HepG2 (cell line): ENCODE measurements at regions of chrX and their contacts with region 1.

Region 1: DNA sequence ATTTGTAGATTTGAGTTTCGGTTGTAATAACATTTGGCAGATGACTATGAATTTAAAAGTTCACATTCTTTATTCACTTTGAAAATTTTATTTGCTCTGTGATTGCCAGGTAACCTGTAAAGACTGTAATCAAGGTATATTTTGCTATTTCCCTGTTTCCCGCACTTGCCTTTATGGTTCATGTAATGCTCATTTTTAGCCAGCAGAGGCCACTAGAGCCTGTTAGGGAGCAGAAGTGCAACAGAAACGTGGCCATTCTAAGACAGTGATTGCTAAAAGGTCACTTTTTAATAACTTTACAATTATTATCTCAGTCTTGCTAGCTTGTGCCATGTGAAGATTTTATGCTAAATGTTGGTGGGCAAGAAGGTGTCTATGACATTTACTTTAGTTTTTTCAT is 12.4 kb downstream of the YIPF6 start:
- DNase-seq: peak; percentile 30
- ATAC-seq: peak; percentile 47; the same call in 1 of the 3 replicates
- H3K4me3 ChIP-seq: no peak overlapping the region
- H3K27ac ChIP-seq: no peak overlapping the region
- H3K4me1 ChIP-seq: peaks cover 10% of the 10 kb centered on the region; the same call in 1 of the 2 replicates
- H3K27me3 ChIP-seq: no peaks in the 10 kb centered on the region
- CTCF ChIP-seq: peak; percentile 65
- EP300 ChIP-seq: no peak
- POLR2A ChIP-seq: no peak
- RAD21 ChIP-seq: 0 out of 2 replicates have a peak, but pooled peaks have one; percentile 35

Region 2: GRCh38 chrX:68665502-68665901 is 154.2 kb after region 1 on chrX:
- CTCF ChIA-PET with region 1: no interaction called
- POLR2A ChIA-PET with region 1: no interaction called
- in situ Hi-C with region 1: no loop called
- intact Hi-C with region 1: loop called (anchors 5 kb)
- DNase-seq: no peak
- ATAC-seq: 0 out of 3 replicates have a peak, but pooled peaks have one; percentile 32
- H3K4me3 ChIP-seq: no peak overlapping the region
- H3K27ac ChIP-seq: no peak overlapping the region
- H3K4me1 ChIP-seq: no peaks in the 10 kb centered on the region
- H3K27me3 ChIP-seq: no peaks in the 10 kb centered on the region
- CTCF ChIP-seq: no peak
- EP300 ChIP-seq: no peak
- POLR2A ChIP-seq: no peak
- RAD21 ChIP-seq: no peak

Region 3: GRCh38 chrX:68710870-68711576 is 199.8 kb after region 1 on chrX:
- CTCF ChIA-PET with region 1: interaction called, 14 read pairs
- POLR2A ChIA-PET with region 1: no interaction called
- in situ Hi-C with region 1: loop called (anchors 5 kb)
- intact Hi-C with region 1: loop called (anchors 1 kb)
- DNase-seq: peak; percentile 40
- ATAC-seq: peak; percentile 97
- H3K4me3 ChIP-seq: no peak overlapping the region
- H3K27ac ChIP-seq: no peak overlapping the region
- H3K4me1 ChIP-seq: no peaks in the 10 kb centered on the region
- H3K27me3 ChIP-seq: no peaks in the 10 kb centered on the region
- CTCF ChIP-seq: peak; percentile 84
- EP300 ChIP-seq: no peak
- POLR2A ChIP-seq: no peak
- RAD21 ChIP-seq: peak; percentile 75

Region 4: DNA sequence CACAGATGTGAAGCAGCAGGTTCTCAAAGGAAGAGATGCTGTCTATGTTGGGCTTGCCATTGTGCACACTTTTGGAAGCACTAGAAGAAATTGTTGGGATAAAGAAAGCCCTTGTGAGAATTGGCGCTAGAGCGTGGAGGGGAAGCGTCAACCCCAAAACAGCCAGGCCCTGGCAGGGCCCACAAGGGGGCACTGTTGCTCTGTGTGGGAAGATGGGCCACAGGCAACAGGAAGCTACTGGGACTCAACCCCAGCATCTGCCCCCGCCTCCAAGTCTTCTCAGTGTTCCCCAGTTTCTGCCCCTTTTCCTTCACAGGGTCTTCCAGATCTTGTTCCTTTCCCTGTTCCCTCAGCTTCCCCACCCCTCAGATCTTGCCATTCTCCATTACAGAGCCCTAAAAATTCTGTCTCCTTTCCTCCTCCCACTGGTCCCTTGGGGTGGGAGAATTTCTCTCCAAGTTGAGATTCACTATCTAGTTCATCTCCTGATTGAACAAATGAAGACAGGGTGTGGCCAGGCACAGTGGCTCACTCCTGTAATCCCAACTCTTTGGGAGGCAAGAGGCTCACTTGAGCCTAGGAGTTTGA is 221.7 kb after region 1 on chrX:
- CTCF ChIA-PET with region 1: no interaction called
- POLR2A ChIA-PET with region 1: no interaction called
- in situ Hi-C with region 1: no loop called
- intact Hi-C with region 1: no loop called
- DNase-seq: peak; percentile 19
- ATAC-seq: peak; percentile 86
- H3K4me3 ChIP-seq: no peak overlapping the region
- H3K27ac ChIP-seq: no peak overlapping the region
- H3K4me1 ChIP-seq: no peaks in the 10 kb centered on the region
- H3K27me3 ChIP-seq: no peaks in the 10 kb centered on the region
- CTCF ChIP-seq: peak; percentile 80
- EP300 ChIP-seq: no peak
- POLR2A ChIP-seq: no peak
- RAD21 ChIP-seq: peak; percentile 75

Region 5: GRCh38 chrX:68807818-68808217 is 296.6 kb after region 1 on chrX:
- CTCF ChIA-PET with region 1: no interaction called
- POLR2A ChIA-PET with region 1: no interaction called
- in situ Hi-C with region 1: no loop called
- intact Hi-C with region 1: loop called (anchors 5 kb)
- DNase-seq: no peak
- ATAC-seq: peak; percentile 66
- H3K4me3 ChIP-seq: no peak overlapping the region
- H3K27ac ChIP-seq: no peak overlapping the region
- H3K4me1 ChIP-seq: no peaks in the 10 kb centered on the region
- H3K27me3 ChIP-seq: no peaks in the 10 kb centered on the region
- CTCF ChIP-seq: peak; percentile 60
- EP300 ChIP-seq: no peak
- POLR2A ChIP-seq: no peak
- RAD21 ChIP-seq: no peak